ENCODE measurements at regions of chr20 and their contacts with region 1.

Region 1: GRCh38 chr20:25696384-25697131 is at the start of gene ZNF337:
- DNase-seq: peak; percentile 96 to 97
- ATAC-seq: peak; percentile 99 to 100 (median 100)
- H3K4me3 ChIP-seq: peak within 1 kb of the TSS; percentile 99
- H3K27ac ChIP-seq: peak within 1 kb of the TSS; percentile 94
- H3K4me1 ChIP-seq: peaks cover 11% of the 10 kb centered on the region
- H3K27me3 ChIP-seq: no peaks in the 10 kb centered on the region
- CTCF ChIP-seq: peak; percentile 21
- total RNA-seq, gene ZNF337: 7.4 to 12.5 (median 9.6) TPM

Region 2: DNA sequence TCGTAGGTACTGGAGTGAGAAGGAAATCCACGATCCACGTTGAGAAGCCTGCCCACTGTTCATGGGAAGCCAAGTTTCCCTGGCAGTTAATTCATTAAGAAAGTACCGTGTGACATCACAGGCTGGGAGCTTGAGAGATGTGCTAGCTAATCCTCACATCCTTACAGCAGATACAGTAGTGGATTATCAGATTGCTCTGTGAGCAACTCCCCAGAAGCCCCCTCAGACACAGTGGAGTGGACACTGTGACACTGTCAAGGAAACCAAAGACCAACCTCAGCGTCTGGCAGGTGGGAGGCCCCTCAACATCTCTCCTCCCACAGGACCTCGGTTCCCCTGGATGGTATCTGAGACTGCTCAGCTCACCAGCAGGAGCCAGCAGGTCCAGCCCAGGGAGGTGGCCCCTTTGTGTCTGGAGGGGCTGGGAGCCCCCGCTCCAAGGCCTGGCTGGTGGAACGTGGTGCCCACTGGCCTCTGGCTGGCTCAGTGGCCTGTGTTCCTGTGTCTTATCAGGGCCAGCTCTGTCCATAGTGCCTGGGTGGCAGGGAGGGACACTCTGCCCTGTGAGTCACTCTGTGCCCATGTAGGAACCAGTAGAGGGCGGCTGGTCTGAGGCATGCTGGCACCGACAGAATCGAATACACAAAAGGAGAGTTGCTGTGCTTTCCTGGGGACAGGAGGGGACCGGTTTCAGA is 441.4 kb before region 1 on chr20:
- intact Hi-C with region 1: loop called in 1 of 2 experiments (anchors 10 kb)
- DNase-seq: peak in 1 of 2 donors; percentile 64
- ATAC-seq: peak; percentile 85 to 96 (median 92)
- H3K4me3 ChIP-seq: no peak overlapping the region
- H3K27ac ChIP-seq: no peak overlapping the region
- H3K4me1 ChIP-seq: peaks cover 27% of the 10 kb centered on the region
- H3K27me3 ChIP-seq: no peaks in the 10 kb centered on the region
- CTCF ChIP-seq: no peak

Region 3: DNA sequence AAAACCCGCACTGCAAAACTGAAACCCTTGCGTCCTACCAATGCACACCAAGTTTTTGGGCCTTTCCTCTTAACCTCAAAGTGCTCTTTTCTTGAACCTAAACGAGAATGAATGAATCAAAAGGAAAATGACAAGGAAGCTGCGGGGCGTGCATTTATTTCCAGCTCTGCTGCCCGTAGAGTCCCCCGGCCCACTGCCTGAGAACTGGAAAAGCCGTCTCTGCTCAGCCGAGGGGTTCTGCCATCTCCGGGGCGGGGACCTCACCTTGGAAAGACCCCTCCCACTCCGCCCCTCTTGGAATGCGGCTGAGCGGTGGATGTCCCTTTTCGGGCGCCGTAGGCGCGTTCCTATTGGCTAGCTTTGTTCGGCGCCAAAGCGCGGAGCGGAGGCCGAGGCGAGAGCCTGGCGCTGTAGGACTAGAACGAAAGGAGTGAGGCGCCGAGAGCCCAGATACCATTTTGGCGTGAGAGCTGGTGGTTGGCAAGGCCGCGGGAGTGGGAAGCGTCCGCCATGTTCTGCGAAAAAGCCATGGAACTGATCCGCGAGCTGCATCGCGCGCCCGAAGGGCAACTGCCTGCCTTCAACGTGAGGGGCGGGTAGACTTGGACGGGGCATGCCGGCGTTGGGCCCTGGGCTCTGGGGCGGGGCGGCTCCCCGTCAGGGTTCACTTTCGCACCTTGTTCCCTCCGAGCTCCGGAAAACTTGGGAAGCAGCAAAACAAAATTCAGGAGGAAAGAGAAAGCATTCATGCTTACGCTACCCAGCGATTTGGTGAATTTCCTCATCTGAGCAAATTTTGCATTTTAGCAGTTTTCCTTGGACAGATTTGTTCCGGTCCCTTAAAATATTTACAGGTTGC is 289.0 kb before region 1 on chr20 and contains the start of gene GINS1:
- intact Hi-C with region 1: loop called in 1 of 2 experiments (anchors 10 kb)
- DNase-seq: peak; percentile 71 to 84
- ATAC-seq: peak; percentile 85 to 99 (median 92)
- H3K4me3 ChIP-seq: peak within 1 kb of the TSS; percentile 81
- H3K27ac ChIP-seq: no peak within 1 kb of the TSS
- H3K4me1 ChIP-seq: peaks cover 8% of the 10 kb centered on the region
- H3K27me3 ChIP-seq: no peaks in the 10 kb centered on the region
- CTCF ChIP-seq: no peak
- total RNA-seq, gene GINS1: 0.11 to 0.20 (median 0.15) TPM in 3 of 4 donors, not detected in the other

Region 4: DNA sequence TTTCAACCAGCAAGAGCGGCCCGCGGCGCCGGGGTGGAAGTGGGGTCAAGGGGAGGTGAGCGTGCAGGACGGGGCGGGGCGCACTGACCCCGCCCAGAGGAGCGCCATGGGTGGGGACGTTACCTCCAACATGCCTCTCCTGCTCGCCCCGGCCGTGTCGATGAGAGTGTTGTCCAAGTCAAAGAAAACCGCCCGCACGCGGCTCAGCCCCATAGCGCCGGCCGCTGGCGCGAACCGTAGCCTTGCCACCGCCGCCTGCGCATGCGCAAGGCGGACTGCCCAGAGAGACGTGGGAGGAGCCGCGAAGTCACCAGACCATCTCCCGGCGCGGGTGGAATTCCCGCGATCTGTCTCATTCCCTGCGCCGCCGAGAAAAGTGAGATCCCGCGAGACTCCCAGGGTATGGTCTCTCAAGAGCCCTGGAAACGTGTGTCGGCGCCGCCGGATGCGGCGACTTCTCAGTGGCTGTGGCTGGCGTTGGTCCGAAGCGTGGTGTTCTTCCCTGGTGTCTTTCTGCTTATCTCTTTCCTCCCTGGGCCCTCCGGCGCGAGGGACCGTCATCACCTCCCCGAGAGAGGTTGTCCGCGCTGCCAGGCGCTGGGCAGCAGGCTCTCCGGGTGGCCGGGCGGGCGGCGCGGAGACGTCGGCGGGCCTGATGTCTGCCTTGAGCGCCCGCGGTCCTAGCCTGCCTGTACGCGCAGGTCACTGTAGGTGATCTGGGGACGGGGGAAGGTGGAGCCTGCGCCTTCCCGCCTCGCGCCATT is 72.6 kb before region 1 on chr20 and contains the start of gene NANP:
- intact Hi-C with region 1: loop called in 1 of 2 experiments (anchors 10 kb)
- DNase-seq: peak; percentile 98
- ATAC-seq: peak; percentile 93 to 96 (median 95)
- H3K4me3 ChIP-seq: peak within 1 kb of the TSS; percentile 89
- H3K27ac ChIP-seq: peak within 1 kb of the TSS; percentile 92
- H3K4me1 ChIP-seq: peaks cover 10% of the 10 kb centered on the region
- H3K27me3 ChIP-seq: no peaks in the 10 kb centered on the region
- CTCF ChIP-seq: no peak
- total RNA-seq, gene NANP: 1.9 to 4.1 (median 2.6) TPM